ENCODE measurements at regions of chr9 and their contacts with region 1.

Region 1: GRCh38 chr9:78921341-78921740 is 624.4 kb downstream of the PSAT1 start:
- DNase-seq: no peak
- H3K4me3 ChIP-seq: no peak overlapping the region
- H3K27ac ChIP-seq: no peak overlapping the region
- H3K4me1 ChIP-seq: no peaks in the 10 kb centered on the region
- H3K27me3 ChIP-seq: no peaks in the 10 kb centered on the region
- CTCF ChIP-seq: no peak

Region 2: DNA sequence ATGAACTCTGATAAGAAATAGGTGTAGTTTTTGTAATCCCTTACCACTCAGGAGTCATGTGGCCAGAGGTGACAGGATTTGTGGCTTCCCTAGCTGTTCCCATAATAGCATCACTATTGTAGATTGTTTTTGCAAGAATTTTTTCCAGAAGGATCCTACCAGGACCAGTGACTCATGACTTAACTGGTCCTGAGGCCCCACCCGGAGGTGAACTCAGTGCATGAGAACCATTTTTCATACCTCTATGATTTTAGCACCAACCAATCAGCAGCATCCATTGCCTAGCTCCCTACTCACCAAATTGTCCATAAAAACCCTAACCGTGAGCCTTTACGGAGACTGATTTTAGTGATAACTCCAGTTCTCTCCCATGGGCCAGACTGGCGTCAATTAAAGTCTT is 139.7 kb before region 1 on chr9:
- intact Hi-C with region 1: no loop called
- DNase-seq: no peak
- H3K4me3 ChIP-seq: no peak overlapping the region
- H3K27ac ChIP-seq: no peak overlapping the region
- H3K4me1 ChIP-seq: no peaks in the 10 kb centered on the region
- H3K27me3 ChIP-seq: no peaks in the 10 kb centered on the region
- CTCF ChIP-seq: no peak

Region 3: DNA sequence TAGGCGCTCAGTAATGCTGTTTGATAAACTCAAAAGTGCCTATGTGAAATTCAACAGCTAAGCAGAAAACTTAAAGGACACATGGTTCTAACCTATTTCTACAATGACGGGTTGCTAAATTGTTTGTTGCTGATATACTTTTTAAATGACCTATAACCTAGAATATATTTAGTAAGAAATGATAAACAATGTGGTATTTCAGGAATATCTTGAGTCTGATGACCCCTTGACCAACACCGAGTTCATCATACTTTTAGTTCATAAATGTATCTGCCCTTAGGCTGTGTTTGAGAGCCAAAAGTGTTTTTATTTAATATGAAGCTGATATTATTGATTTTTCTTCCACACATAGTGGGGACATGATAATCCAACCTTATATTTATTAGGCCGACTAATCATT is 30.8 kb after region 1 on chr9:
- intact Hi-C with region 1: loop called (anchors 1 kb)
- DNase-seq: no peak
- H3K4me3 ChIP-seq: no peak overlapping the region
- H3K27ac ChIP-seq: no peak overlapping the region
- H3K4me1 ChIP-seq: no peaks in the 10 kb centered on the region
- H3K27me3 ChIP-seq: no peaks in the 10 kb centered on the region
- CTCF ChIP-seq: no peak

Region 4: GRCh38 chr9:79026316-79026715 is 105.0 kb after region 1 on chr9:
- intact Hi-C with region 1: no loop called
- DNase-seq: no peak
- H3K4me3 ChIP-seq: no peak overlapping the region
- H3K27ac ChIP-seq: no peak overlapping the region
- H3K4me1 ChIP-seq: no peaks in the 10 kb centered on the region
- H3K27me3 ChIP-seq: no peaks in the 10 kb centered on the region
- CTCF ChIP-seq: no peak